BJ (cell line): ENCODE measurements at regions of chr20 and their contacts with region 1.

Region 1: GRCh38 chr20:41173161-41173721 is 35.9 kb downstream of the PLCG1 start:
- DNase-seq: no peak
- H3K4me3 ChIP-seq: no peak overlapping the region
- H3K27me3 ChIP-seq: no peaks in the 10 kb centered on the region
- CTCF ChIP-seq: peak; percentile 98

Region 2: DNA sequence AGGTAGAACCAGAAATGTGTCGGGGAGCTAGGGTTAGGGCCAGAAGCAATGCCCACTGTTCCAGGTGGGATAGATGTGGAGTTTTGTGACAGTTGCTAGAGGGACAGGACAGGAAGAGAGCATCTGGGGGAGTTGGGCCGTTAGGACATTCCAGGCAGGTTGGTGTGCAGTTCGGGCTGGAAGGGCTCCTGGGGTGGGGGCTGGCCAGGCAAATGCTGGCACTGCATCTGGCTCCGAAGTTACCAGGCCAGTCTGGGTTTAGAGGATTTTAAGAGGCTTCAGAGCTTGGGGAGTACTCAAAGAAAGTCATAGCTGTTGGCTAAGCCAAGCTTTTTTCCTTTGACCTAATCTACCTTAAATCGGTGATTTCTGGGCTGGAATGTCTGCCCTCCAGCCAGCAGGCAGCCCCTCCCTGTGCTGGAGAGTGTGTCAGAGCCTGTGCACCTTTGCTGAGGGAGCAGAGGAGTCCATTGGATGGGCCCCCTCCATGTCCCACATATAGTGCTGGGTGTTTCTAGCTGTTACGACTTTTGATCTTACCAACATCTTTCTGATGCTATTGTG is 15.1 kb before region 1 on chr20:
- CTCF ChIA-PET with region 1: interaction called, 14 read pairs
- POLR2A ChIA-PET with region 1: no interaction called
- DNase-seq: no peak
- H3K4me3 ChIP-seq: no peak overlapping the region
- H3K27me3 ChIP-seq: no peaks in the 10 kb centered on the region
- CTCF ChIP-seq: no peak

Region 3: DNA sequence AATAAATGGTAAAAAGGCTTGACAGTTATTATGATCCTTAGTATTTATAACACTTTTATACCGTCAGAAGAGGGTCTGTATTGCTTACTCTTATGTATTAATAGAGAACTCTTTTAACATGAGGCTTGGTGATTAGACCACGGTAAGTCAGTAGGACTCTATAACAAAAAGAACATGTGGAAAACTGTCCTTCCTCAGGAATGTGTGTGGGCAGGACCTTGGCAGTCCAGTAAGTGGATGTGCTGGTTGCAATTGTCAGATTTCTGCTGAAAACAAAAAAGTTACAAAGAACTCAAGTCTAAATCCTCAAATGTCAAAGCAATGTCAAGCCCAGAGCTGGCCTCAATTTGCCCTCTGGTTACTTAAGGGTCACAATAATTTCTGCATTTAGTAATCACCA is 45.2 kb after region 1 on chr20:
- CTCF ChIA-PET with region 1: interaction called, 13 read pairs
- POLR2A ChIA-PET with region 1: no interaction called
- DNase-seq: peak; percentile 38
- H3K4me3 ChIP-seq: no peak overlapping the region
- H3K27me3 ChIP-seq: no peaks in the 10 kb centered on the region
- CTCF ChIP-seq: no peak

Region 4: DNA sequence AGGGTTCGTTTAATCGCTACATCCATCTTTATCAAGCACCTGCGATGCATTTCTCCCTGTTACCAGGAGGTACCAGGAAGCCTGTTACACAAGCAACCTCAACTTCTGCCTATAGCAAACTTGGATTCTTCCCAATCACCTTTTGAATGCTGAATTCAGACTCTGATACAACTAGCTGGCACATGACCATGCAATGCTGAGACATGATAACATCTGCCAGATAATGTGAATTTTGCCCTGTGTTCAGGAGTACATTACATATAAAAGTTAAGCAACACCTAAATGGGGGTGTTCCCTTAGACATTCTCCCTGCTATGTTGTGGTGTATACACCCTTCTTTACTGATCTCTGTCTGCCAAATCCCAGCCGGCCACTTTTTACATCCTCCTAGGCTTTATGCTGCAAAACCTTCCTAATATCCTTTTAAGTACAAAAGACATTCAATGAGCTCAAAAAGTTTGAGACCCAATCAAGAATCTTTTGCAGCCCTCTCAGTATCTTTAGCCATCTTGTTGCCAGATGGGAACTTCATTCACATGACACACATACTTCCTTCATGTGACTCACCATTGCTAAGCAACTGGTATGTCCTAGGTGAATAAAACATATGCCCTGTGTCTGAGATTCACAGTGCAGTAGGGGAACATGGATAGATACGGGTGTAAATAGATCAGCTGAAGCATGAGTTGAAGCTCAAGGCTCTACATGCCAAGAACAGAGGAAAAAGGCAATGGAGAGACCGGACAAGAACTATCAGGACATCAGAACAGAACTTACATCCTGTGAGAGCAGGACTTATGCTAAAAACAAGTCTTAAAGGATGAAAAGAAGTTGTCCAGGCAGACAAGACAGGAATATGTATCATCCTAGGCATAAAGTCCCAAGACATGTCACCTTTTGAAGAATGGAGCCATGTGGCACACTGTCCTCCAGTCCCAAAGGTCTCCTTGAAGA is 60.0 kb after region 1 on chr20:
- CTCF ChIA-PET with region 1: interaction called, 67 read pairs
- POLR2A ChIA-PET with region 1: interaction called, 3 read pairs
- DNase-seq: peak; percentile 81
- H3K4me3 ChIP-seq: no peak overlapping the region
- H3K27me3 ChIP-seq: no peaks in the 10 kb centered on the region
- CTCF ChIP-seq: no peak

Region 5: DNA sequence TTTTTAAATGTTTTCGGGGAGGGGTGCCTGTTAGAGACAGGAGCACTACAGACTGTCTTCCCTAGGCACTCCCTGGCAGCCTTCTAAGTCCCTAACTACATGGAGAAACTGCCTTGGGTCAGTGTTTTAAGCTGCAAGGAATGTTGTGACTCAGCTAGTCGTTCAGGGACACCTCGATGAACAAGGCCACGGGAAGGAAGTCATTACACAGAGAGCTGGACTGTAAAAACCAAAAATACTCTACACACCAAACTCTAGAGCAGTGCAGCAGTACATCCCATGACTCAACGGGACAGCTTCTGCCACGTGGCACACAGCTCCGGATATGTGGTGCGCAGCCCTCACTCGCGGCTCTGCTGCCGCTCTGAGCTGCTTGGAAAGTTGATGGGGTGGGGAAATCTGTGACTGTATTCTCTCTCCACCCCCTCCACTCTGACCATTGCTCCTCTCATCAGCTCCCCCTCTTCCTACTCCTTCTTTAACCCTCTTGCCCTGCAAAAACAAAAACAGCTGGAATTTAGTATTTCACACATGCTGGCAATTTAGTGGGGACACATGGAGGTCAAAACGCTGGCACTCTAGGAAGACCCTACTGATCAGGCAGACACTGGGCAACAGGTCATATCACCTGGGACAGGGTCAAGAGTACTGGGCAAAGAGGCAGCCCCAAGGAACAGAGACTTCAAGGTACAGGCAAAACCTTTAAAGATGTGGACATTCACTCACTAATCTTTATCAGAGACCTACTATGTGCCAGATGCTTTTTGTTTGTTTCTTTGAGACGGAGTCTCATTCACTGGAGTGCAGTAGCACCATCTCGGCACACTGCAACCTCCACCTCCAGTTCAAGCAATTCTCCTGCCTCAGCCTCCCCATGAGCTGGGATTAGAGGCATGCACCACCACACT is 156.4 kb after region 1 on chr20:
- CTCF ChIA-PET with region 1: interaction called, 13 read pairs
- POLR2A ChIA-PET with region 1: no interaction called
- DNase-seq: peak; percentile 98
- H3K4me3 ChIP-seq: peak overlapping the region; percentile 5; the same call in 1 of the 2 replicates
- H3K27me3 ChIP-seq: no peaks in the 10 kb centered on the region
- CTCF ChIP-seq: no peak

Region 6: DNA sequence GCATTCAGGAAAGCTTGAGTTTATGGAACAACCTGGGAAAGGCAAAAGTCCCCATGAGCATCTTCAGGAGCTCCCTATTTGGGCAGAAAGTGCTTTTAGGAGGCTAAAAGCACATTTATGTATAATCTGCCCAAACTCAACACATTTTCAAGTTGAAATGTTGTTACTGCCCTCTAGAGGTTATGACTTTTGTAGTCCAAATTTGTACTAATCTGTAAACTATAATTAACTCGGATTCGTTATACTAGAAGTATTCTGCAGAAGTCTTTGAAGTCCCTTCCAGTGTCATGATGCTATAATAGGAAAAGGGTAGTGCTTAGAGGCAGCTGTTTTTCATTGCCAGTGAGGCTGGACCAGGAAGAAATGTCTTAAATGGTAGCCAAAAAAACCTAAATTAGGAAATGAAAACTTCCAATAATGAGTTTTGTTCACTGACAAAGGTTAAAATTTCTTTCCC is 238.2 kb after region 1 on chr20:
- CTCF ChIA-PET with region 1: interaction called, 15 read pairs
- POLR2A ChIA-PET with region 1: no interaction called
- DNase-seq: no peak
- H3K4me3 ChIP-seq: no peak overlapping the region
- H3K27me3 ChIP-seq: no peaks in the 10 kb centered on the region
- CTCF ChIP-seq: peak; percentile 41